Colonic mucosa (tissue), 4 donors: ENCODE measurements at regions of chr13 and their contacts with region 1.

Region 1: GRCh38 chr13:75372517-75372916 is 109.5 kb downstream of the TBC1D4 start:
- DNase-seq: peak; percentile 32
- H3K4me3 ChIP-seq: no peak overlapping the region
- H3K27ac ChIP-seq: no peak overlapping the region
- H3K4me1 ChIP-seq: no peaks in the 10 kb centered on the region
- H3K27me3 ChIP-seq: no peaks in the 10 kb centered on the region
- CTCF ChIP-seq: peak; percentile 70

Region 2: DNA sequence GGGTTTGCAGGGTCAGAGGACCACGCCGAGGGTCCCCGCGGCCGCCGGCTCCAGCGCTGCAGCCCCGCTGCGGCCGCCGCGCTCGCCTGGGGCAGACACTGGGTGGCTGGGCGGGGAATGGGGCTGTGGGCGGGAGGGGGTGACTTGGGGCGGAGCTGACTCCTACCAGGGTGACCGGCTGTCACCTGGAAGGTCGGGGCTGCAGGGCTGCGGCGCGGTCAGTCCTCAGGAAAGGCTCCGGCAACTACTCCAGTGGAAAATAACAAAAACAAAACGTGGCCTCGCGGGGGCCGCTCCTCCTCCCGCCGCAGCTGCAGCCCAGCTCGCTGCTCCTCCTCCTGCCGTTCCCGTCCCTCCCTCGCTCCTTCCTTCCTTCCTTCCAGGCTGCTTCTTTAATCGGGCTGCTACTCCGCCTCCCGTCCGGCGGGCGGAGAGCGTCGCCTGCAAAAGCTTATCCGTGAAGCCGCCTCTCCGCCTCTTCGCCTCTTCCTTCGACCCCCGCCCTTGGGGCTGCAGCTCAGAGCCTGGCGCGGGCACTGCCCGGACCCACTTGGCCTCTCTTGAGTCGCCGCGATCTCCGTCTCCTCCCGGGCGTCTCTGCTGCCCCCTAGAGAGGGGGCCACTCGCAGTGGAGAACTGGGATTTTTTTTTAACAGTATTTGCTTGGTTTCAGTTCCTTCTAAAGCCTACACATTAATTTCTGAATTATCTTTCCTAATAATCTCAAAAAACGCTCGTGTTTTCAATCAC is 109.7 kb after region 1 on chr13 and contains the start of gene TBC1D4:
- intact Hi-C with region 1: loop called (anchors 5 kb)
- DNase-seq: peak; percentile 89
- H3K4me3 ChIP-seq: peak within 1 kb of the TSS; percentile 84
- H3K27ac ChIP-seq: peak within 1 kb of the TSS; percentile 89
- H3K4me1 ChIP-seq: no peaks in the 10 kb centered on the region
- H3K27me3 ChIP-seq: no peaks in the 10 kb centered on the region
- CTCF ChIP-seq: peak; percentile 77
- total RNA-seq, gene TBC1D4: 16.7 to 27.9 TPM

Region 3: GRCh38 chr13:76016799-76017400 is 644.4 kb after region 1 on chr13:
- intact Hi-C with region 1: no loop called
- DNase-seq: peak; percentile 26
- H3K4me3 ChIP-seq: no peak overlapping the region
- H3K27ac ChIP-seq: no peak overlapping the region
- H3K4me1 ChIP-seq: no peaks in the 10 kb centered on the region
- H3K27me3 ChIP-seq: no peaks in the 10 kb centered on the region
- CTCF ChIP-seq: peak; percentile 22